Right ventricle myocardium inferior (tissue), 1 donor: ENCODE measurements at regions of chrX and their contacts with region 1.

Region 1: DNA sequence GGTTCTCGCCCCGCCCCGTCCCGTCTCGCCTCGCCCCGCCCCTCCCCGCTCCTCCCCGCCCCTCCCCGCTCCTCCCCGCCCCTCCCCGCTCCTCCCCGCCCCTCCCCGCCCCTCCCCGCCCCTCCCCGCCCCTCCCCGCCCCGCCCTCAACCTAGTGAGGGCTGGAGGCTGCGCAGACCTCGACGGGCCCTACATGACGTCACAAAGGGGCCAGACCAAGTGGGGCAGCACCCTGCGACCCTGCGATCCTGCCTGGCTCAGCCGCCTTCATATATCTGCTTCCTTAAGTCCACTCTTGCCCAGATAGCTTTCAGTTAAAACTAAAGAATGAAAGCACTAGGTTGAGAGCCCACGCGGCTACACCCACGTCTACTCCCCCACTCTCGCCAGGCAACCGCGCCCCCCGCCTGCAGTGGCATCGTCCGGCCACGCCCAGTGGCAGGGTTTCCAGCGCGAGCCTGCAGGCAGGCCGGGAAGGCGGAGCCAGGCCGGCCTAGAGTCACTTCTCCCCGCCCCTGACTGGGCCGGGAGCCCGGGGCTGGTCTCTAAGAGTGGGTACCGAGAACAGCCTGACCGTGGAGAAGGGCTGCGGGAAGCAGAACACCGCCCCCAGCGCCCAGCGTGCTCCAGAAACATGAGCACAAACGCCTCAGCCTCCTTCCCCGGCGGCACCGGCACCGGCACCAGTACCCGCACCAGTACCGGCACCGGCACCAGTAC is 1.5 kb upstream of the MAOA start:
- DNase-seq: peak; percentile 97
- ATAC-seq: peak; percentile 97

Region 2: DNA sequence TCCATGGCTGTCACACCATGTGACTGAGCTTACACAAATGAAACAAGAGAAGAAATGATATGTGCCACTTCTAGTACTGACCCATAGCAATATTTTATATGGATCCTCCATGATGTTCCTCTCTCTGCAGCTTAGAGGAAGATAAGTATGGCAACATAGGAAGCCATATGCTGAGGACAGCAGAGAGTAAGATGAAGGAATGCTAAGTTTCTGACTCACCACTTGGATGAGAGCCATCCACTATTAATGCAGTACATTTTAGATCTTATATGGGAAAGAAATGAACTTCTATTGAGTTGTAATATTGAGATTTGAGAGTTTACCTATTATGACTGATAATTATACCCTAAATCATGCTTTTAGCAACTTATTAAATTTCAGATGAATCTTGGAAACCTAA is 385.4 kb before region 1 on chrX:
- intact Hi-C with region 1: no loop called
- DNase-seq: no peak
- ATAC-seq: no peak

Region 3: DNA sequence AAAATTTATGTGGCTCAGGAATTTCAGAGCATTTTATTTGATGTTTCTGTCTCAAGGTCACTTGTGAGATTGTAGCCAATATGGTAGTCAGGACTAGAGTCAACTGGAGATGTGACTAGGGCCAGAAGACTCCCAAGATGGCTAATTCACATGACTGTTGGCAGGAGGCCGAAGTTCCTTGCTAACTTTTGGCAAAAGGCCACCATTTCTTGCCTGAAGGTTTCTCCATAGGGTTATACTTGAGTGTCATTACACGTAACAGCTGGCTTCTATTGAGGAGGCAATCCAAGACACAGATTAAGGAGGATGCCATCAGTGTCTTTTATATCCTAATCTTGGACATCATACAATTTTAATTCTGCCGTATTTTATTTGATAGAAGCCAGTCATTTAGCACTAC is 160.8 kb before region 1 on chrX:
- intact Hi-C with region 1: no loop called
- DNase-seq: no peak
- ATAC-seq: no peak

Region 4: DNA sequence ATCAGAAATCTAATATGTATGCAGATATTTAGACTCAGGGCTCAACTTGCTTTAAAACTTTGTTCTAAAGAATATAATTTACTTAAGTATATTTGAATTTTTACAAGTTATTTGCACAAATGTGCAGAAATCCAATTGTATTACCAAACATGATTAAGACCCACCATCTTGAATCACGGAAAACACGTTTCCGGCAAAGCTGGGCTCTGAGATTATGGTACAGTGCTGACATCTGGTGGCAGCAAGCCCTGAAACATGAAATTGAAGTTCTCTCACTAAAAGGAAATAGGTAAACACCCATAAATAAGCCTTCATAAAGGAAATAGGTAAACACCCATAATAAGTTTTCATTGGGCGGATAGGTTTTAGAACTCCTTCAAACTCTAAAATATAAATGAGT is 96.8 kb before region 1 on chrX:
- intact Hi-C with region 1: loop called (anchors 5 kb)
- DNase-seq: no peak
- ATAC-seq: no peak

Region 5: DNA sequence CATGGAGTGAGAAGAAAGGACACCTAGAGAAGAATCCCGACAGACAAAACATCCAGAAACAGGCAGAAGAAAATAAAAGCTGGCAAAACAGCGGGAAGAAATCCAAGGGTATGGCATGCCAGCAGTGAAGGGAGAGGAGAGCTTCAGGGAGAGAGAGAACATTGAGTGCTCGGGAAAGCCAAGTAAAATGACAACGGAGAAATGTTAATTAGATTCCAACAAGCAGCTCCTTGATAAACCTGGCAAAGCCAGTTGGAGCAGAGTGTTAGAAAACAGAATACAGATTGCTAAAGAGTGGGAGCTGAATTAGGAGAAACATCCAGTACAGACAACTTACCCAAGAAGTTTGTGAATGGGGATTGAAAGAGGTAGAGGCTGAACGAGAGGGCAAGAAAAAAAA is 38.9 kb before region 1 on chrX:
- intact Hi-C with region 1: loop called (anchors 2 kb)
- DNase-seq: no peak
- ATAC-seq: peak; percentile 65

Region 6: DNA sequence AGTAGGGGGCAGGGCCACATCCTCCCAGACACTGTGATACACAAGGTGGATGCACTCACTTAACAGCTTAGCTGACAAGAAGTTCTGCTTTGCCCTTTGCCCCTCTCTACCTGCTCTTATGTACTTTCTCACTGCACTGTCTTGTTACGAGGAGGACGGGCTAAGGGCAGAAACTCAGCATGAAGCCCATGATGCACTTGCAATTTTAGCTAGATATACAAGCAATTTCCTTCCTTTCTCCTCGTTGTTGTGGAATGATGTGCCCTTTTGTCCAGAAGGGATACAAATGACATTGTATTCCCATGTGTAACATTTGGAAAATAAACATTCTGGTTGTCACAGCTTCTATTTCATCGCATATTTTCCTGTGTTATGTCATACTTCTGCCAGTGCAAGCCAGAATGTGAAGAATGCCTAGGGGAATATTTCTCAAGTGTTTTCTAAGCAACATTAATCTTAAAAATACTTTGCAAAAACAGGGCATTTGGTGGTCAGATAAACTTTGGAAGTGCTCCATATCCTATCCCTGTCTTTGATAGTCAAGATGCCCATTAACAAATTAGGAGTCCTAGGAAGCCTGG is 48.7 kb after region 1 on chrX:
- intact Hi-C with region 1: loop called (anchors 2 kb)
- DNase-seq: no peak
- ATAC-seq: peak; percentile 66

Region 7: DNA sequence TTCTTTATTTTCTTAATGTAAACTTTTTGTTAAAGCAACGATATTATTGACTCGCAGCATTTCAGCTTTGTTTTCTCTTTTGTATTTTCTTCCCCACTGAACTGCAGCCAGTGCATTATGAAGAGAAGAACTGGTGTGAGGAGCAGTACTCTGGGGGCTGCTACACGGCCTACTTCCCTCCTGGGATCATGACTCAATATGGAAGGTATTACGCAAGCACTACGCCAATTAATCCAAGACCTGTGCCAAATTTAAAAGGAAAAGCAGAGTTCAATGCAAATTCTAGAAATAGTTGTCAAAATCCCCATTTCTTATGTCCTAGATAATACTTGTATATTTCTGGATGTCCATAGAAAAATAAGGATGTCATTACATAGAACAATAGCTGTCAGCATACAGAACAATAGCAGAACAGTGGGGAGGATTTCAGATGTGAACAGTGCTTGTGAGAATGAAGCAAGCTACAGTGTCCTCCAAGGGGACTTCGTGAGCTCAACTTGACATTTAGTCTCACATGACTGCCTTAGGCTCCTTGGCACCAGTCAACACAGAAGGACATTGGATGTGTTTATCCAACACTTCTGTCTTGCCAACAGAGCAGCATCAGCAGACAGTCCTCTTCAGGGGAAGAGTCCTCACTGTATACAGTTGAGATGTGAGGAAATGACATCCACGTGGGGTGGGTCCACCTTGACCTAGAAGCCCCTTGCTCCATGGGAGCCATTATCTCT is 87.4 kb after region 1 on chrX:
- intact Hi-C with region 1: loop called (anchors 2 kb)
- DNase-seq: no peak
- ATAC-seq: peak; percentile 92

Region 8: DNA sequence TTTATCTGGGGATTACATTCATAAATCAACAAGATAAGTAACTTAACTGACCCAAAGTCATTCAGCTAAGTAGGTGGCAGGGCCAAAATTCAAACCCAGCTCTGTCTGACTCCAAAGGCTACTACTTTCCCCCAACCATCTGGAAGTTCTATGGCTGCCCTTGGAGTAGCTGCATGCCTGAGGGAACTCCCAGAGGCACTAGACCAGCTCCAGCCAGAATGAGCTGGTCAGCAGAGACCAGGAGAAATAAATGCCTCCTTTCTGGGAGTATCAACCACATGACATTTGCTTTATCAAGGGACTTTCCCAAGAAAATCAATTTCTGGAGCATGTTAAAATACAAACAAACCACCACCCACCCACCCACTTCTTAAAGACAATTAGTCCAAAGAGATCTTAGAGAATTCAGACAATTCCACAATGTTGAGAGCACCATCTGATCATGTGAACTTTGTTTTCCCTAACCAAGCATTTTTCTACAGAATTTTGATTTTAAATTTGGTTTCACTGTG is 508.4 kb after region 1 on chrX:
- intact Hi-C with region 1: no loop called
- DNase-seq: no peak
- ATAC-seq: no peak